Posterior vena cava (tissue), 2 donors: ENCODE measurements at regions of chrX and their contacts with region 1.

Region 1: GRCh38 chrX:153953342-153953830 is 8.9 kb upstream of the RENBP start:
- DNase-seq: peak; percentile 95

Region 2: GRCh38 chrX:152958524-152959465 is 994.6 kb before region 1 on chrX:
- intact Hi-C with region 1: loop called in 1 of 2 experiments (anchors 10 kb)
- DNase-seq: peak; percentile 96

Region 3: GRCh38 chrX:153763989-153764755 is 189.2 kb before region 1 on chrX and contains the start of gene PLXNB3:
- intact Hi-C with region 1: loop called in 1 of 2 experiments (anchors 2 kb)
- DNase-seq: peak; percentile 93
- total RNA-seq, gene PLXNB3: 16.8 to 19.1 TPM